Thyroid gland (tissue), 4 donors: ENCODE measurements at regions of chr6 and their contacts with region 1.

Region 1: DNA sequence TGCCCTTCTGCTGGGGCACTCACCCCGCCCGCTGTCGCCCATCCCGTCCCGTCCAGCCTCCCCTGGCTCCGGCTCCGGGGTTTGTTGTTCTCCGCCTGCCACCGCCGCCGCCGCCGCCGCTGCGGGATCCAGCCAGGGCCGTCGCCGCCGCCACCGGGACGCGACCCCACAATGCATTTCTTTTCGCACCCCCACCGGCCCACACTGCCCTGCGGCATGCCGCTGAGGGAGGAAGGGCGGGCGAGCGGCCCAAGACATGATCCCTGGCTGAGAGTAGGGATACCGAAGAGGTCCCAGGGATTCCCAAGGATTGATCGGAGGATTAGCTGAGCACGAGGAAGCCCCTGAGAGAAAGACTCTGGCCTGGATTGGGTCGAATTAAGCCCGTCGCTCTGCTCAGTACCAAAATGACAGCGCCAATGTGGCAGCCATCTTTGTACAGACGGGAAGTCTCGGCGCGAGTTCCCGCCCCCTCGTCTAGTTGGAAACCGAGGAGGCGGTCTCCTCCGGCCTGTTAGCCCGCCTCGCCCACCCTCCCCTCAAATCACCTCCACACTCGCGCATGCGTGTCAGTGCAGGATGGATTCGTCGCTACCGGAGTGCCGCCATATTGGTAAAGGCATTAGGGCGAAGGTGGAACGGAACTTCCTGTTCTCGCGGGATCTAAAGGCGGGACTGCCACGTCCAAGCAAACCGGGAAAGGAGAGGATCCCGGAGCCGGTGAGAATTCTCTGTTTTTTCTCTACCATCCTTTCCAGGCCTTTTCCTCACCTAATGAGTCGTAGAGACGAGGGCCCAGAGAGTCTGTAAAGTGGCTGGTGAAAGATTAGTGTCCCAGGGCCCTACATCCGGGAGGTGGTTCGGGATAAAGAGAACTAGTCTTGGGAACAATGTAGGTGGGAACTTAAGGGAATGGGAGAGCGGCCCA is at the starts of genes RXRB and SLC39A7:
- DNase-seq: peak; percentile 100
- H3K4me3 ChIP-seq: peak within 1 kb of the TSS; percentile 63 to 84 (median 79)
- H3K27ac ChIP-seq: peak within 1 kb of the TSS; percentile 64 to 96 (median 96)
- H3K4me1 ChIP-seq: peaks cover 38 to 58% of the 10 kb centered on the region in 2 donors
- H3K27me3 ChIP-seq: no peaks in the 10 kb centered on the region
- CTCF ChIP-seq: no peak
- POLR2A ChIP-seq: peak in 1 of 2 donors; percentile 70
- total RNA-seq, gene RXRB: 29.6 to 46.8 (median 41.2) TPM
- total RNA-seq, gene SLC39A7: 90.8 to 191 (median 153) TPM

Region 2: GRCh38 chr6:33161354-33162331 is 38.8 kb before region 1 on chr6:
- intact Hi-C with region 1: loop called (anchors 5 kb)
- DNase-seq: peak; percentile 81 to 84
- H3K4me3 ChIP-seq: peak overlapping the region in 1 of 3 donors; percentile 32
- H3K27ac ChIP-seq: peak overlapping the region in 2 of 3 donors; percentile 44 to 50
- H3K4me1 ChIP-seq: peaks cover 0 to 17% of the 10 kb centered on the region in 2 donors
- H3K27me3 ChIP-seq: no peaks in the 10 kb centered on the region
- CTCF ChIP-seq: peak; percentile 70 to 96 (median 92)
- POLR2A ChIP-seq: no peak

Region 3: GRCh38 chr6:33264015-33264414 is 63.5 kb after region 1 on chr6:
- intact Hi-C with region 1: no loop called
- DNase-seq: no peak
- H3K4me3 ChIP-seq: no peak overlapping the region
- H3K27ac ChIP-seq: no peak overlapping the region
- H3K4me1 ChIP-seq: no peaks in the 10 kb centered on the region
- H3K27me3 ChIP-seq: no peaks in the 10 kb centered on the region
- CTCF ChIP-seq: no peak
- POLR2A ChIP-seq: no peak

Region 4: GRCh38 chr6:33313709-33314514 is 113.4 kb after region 1 on chr6 and contains the start of gene TAPBP:
- intact Hi-C with region 1: no loop called
- DNase-seq: peak; percentile 65 to 72
- H3K4me3 ChIP-seq: peak within 1 kb of the TSS; percentile 19 to 92 (median 35)
- H3K27ac ChIP-seq: peak within 1 kb of the TSS; percentile 94 to 99 (median 98)
- H3K4me1 ChIP-seq: peaks cover 24 to 47% of the 10 kb centered on the region in 2 donors
- H3K27me3 ChIP-seq: no peaks in the 10 kb centered on the region
- CTCF ChIP-seq: no peak
- POLR2A ChIP-seq: peak; percentile 43 to 72
- total RNA-seq, gene TAPBP: 86.4 to 151 (median 132) TPM

Region 5: DNA sequence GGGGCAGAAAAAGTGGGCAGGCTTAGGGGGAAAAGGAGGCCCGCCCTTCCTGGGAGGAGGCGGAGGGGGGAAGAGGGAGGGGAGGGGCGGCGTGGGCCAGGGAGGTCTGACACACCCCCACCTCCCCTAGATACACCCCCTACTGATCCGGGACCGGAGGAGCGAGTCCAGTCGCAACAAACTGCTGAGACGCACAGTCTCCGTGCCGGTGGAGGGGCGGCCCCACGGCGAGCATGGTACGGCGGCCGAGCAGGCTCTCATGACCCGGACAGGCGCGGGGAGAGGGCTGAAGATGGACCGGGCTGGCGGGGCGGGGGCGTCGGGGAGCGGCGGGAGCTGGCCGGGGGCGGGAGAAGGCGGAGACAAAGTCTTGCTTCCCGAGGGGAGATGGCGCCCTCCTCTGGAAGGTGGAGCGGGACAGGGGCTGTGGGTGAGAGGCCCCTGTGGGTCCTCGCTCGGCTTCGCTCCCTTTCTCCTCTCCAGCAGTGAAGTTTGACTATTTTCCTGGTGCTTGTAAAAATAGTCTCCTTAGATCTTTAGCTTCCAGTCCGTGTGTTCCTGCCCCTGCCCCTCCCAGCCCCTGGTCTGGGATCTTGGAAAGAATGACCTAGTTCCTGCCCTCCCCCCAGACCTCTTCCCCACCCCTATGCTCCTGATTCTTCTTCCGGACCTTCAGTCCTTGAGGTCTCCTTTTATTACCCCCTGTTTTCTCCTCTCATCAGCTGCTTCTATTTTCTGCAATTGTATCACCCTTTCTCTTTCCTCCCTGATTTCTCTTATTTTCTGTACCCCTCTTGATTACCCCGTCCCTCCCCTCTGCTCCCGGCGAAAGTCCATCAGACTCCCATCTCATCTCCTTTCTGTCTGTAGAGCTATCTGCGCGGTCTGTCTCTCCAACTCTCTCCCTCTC is 225.4 kb after region 1 on chr6:
- intact Hi-C with region 1: loop called (anchors 10 kb)
- DNase-seq: peak; percentile 84 to 86
- H3K4me3 ChIP-seq: peak overlapping the region in 2 of 3 donors; percentile 53 to 59
- H3K27ac ChIP-seq: peak overlapping the region; percentile 95 to 98 (median 95)
- H3K4me1 ChIP-seq: peaks cover 26 to 29% of the 10 kb centered on the region in 2 donors
- H3K27me3 ChIP-seq: no peaks in the 10 kb centered on the region
- CTCF ChIP-seq: peak in 5 of 6 experiments; percentile 13 to 67 (median 37)
- POLR2A ChIP-seq: peak in 1 of 2 donors; percentile 65